Heart left ventricle (tissue), 16 donors: ENCODE measurements at regions of chr16 and their contacts with region 1.

Region 1: GRCh38 chr16:71311553-71312158 is 22.5 kb upstream of the CMTR2 start:
- DNase-seq: no peak
- ATAC-seq: no peak
- H3K4me3 ChIP-seq: no peak overlapping the region
- H3K27ac ChIP-seq: no peak overlapping the region
- H3K4me1 ChIP-seq: no peaks in the 10 kb centered on the region
- H3K27me3 ChIP-seq: peaks cover 0 to 23% (median 4%) of the 10 kb centered on the region in 9 donors
- CTCF ChIP-seq: peak; percentile 47 to 77 (median 64)
- POLR2A ChIP-seq: no peak

Region 2: GRCh38 chr16:71201054-71201453 is 110.6 kb before region 1 on chr16:
- intact Hi-C with region 1: no loop called
- DNase-seq: no peak
- ATAC-seq: no peak
- H3K4me3 ChIP-seq: no peak overlapping the region
- H3K27ac ChIP-seq: no peak overlapping the region
- H3K4me1 ChIP-seq: no peaks in the 10 kb centered on the region
- H3K27me3 ChIP-seq: no peaks in the 10 kb centered on the region
- CTCF ChIP-seq: no peak
- POLR2A ChIP-seq: no peak

Region 3: GRCh38 chr16:71214746-71215381 is 96.8 kb before region 1 on chr16:
- intact Hi-C with region 1: loop called in 1 of 10 experiments (anchors 10 kb)
- DNase-seq: no peak
- ATAC-seq: no peak
- H3K4me3 ChIP-seq: no peak overlapping the region
- H3K27ac ChIP-seq: no peak overlapping the region
- H3K4me1 ChIP-seq: no peaks in the 10 kb centered on the region
- H3K27me3 ChIP-seq: no peaks in the 10 kb centered on the region
- CTCF ChIP-seq: peak in 2 of 12 donors; percentile 23 to 31
- POLR2A ChIP-seq: no peak

Region 4: GRCh38 chr16:71449020-71449419 is 137.4 kb after region 1 on chr16:
- intact Hi-C with region 1: no loop called
- DNase-seq: no peak
- ATAC-seq: no peak
- H3K4me3 ChIP-seq: no peak overlapping the region
- H3K27ac ChIP-seq: no peak overlapping the region
- H3K4me1 ChIP-seq: no peaks in the 10 kb centered on the region
- H3K27me3 ChIP-seq: no peaks in the 10 kb centered on the region
- CTCF ChIP-seq: no peak
- POLR2A ChIP-seq: no peak